Heart left ventricle (tissue), 16 donors: ENCODE measurements at regions of chr2 and their contacts with region 1.

Region 1: DNA sequence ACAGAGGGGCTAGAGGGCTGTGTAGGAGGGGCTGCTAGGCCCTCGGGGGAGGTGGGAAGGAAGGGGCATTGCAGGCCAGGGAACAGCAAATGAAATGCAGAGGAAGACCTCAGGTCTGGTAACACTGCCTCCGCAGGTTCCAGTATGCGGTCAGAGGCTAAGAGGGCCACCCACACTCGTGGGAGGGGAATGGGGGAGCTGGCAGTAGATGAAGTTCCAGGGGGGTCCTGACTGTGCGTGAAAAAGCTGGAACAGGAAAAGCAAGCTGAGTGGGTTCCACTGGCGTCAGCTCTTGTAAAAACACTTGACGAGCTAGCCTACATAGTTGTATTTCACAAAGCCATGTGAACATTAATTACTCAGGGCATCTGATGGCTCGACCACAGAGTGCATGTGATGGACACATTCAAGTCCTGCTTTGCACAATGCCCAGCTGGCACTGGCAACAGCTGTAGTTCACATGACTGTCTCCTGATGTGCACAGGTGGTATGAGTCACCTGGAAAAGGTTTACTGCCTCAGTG is 29.0 kb upstream of the PTPN4 start:
- DNase-seq: no peak
- ATAC-seq: no peak
- H3K4me3 ChIP-seq: no peak overlapping the region
- H3K27ac ChIP-seq: no peak overlapping the region
- H3K4me1 ChIP-seq: peaks cover 0 to 11% (median 0%) of the 10 kb centered on the region in 12 donors
- H3K27me3 ChIP-seq: no peaks in the 10 kb centered on the region
- CTCF ChIP-seq: no peak
- POLR2A ChIP-seq: no peak

Region 2: GRCh38 chr2:119678998-119679710 is 51.6 kb before region 1 on chr2 and contains the start of gene TMEM177:
- intact Hi-C with region 1: no loop called
- DNase-seq: peak; percentile 84 to 94 (median 88)
- ATAC-seq: peak; percentile 76 to 97 (median 94)
- H3K4me3 ChIP-seq: peak within 1 kb of the TSS; percentile 62 to 95 (median 78)
- H3K27ac ChIP-seq: peak within 1 kb of the TSS in 7 of 12 donors; percentile 16 to 72 (median 60)
- H3K4me1 ChIP-seq: peaks cover 0 to 14% (median 7%) of the 10 kb centered on the region in 12 donors
- H3K27me3 ChIP-seq: no peaks in the 10 kb centered on the region
- CTCF ChIP-seq: no peak
- POLR2A ChIP-seq: peak in 1 of 2 donors; percentile 55
- total RNA-seq, gene TMEM177: 7.7 to 13.7 (median 9.6) TPM

Region 3: DNA sequence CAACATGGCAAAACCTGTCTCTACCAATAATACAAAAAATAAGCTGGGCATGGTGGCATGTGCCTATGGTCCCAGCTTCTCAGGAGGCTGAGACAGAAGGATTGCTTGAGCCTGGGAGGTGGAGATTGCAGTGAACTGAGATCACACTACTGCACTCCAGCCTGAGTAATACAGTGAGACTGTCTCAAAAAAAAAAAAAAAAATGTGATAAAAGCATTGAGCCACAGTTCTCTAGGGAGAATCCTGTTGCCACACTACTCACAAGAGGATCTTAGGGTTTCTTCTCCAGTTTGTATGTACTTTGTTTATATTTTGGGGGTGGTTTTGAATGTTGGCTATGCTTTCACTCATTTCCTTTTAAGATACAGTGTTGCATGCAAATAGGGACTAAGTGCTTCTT is 430.5 kb after region 1 on chr2:
- intact Hi-C with region 1: loop called in 1 of 10 experiments (anchors 10 kb)
- DNase-seq: no peak
- ATAC-seq: no peak
- H3K4me3 ChIP-seq: no peak overlapping the region
- H3K27ac ChIP-seq: no peak overlapping the region
- H3K4me1 ChIP-seq: no peaks in the 10 kb centered on the region
- H3K27me3 ChIP-seq: no peaks in the 10 kb centered on the region
- CTCF ChIP-seq: no peak
- POLR2A ChIP-seq: no peak